Right cardiac atrium (tissue), 5 donors: ENCODE measurements at regions of chr17 and their contacts with region 1.

Region 1: DNA sequence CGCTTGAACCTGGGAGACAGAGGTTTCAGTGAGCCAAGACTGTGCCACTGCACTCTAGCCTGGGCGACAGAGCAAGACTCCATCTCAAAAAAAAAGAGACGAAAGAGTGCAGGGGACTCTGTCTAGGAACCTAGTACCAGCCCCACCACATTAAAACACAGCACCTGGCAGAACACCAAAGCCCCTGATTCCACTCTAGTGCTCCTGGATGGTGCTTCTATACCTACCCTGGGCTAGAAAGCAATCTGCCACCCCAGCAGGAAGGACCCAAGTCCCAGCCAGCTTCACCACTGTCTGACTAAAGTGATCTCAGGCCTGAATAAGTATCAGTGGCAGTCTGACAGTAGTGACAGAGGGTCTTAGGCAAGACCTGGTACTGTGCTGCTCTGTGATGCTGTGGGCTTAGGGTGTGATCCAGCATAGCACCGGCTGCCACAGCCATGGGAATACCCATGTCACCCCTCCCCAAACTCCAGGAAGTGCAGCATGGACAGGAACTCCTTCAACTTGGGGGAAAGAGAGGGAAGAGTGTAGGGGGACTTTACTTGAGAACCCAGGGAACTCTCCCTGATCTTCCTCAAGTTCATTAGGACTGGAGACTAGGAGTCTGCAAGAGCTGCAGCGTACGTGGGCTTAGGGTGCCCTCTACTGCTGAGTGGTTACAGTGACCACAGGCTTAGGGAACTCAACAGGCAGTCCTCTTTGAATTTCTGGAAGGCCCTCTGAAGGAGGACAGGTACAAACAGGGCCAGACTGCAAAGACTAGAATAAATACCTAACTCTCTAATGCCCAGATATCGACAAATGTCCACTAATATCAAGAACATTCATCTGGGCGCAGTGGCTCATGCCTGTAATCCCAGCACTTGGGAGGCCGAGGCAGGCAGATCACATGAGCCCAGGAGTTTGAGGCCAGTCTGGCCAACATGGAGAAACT is 30.0 kb upstream of the RNF43 start:
- DNase-seq: peak; percentile 44 to 74 (median 69)
- ATAC-seq: peak; percentile 71 to 74
- H3K4me3 ChIP-seq: no peak overlapping the region
- H3K27ac ChIP-seq: no peak overlapping the region
- H3K4me1 ChIP-seq: no peaks in the 10 kb centered on the region
- H3K27me3 ChIP-seq: no peaks in the 10 kb centered on the region

Region 2: DNA sequence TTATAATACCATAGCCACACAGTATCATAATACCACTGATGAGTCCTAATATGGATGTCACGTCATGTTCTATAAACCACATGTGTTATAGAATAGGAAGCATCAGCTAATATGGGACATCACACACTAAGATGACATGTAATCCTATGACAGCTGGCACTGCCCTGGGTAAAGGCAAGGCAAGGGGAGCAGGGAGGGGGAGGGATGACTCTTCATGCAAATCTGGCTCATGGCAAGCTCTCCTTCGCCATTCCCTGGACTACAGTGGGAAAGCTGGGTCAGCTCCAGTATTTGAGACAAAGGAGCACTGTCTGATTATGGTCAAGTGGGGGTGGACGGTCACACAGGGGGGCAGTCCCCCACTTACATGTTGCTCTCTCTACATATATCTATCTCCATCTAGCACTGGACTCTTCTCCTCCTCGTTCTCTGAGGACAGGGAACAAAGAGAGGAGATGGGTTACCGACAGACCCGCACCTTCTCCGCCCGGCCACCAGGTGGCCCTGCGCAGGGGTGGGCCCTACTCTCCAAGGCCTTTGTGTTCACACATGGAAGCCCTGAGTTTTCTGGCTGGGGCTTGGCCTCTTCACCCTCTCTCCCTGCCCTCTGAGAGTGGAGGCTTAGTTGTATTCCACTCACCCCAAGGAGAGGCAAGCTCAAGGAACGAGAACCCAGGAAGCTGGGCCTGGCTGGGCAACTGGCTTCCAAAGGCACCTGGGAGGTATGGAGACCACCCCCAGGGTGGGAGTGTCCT is 143.2 kb before region 1 on chr17:
- intact Hi-C with region 1: loop called in 1 of 4 experiments (anchors 10 kb)
- DNase-seq: no peak
- ATAC-seq: peak; percentile 37 to 63
- H3K4me3 ChIP-seq: no peak overlapping the region
- H3K27ac ChIP-seq: no peak overlapping the region
- H3K4me1 ChIP-seq: no peaks in the 10 kb centered on the region
- H3K27me3 ChIP-seq: no peaks in the 10 kb centered on the region

Region 3: DNA sequence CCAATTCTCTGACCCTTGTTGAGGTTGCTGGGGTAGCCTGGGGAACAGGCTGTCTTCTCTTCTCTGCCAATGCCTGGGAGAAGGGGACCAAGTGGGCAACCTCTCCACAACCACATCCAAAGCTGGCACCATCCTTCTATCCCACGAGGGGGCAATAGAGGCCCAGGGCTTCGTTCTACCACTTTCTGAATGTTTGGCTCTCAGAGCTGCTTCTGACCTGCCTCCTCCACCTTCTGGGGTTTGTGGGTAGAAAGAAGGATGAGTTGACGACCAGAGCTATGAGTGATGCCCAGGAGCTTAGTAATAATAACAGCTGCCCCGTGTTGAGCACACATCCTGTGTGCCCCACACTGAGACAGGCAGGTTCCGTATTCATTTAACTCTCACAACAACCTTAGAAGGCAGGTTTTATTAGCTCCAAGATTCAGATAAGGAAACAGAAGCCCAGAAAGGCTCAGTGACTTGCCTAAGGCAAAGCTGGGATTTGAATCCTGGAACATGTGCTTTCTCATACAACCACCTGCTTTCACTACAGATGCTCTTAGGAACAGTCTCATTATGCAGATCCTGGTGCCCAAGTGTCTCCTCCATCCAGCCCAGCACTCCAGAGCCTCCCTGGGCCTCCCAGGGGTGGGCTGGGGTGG is 129.8 kb before region 1 on chr17:
- intact Hi-C with region 1: loop called in 2 of 4 experiments (anchors 10 kb)
- DNase-seq: no peak
- ATAC-seq: peak in 1 of 2 donors; percentile 37
- H3K4me3 ChIP-seq: no peak overlapping the region
- H3K27ac ChIP-seq: no peak overlapping the region
- H3K4me1 ChIP-seq: no peaks in the 10 kb centered on the region
- H3K27me3 ChIP-seq: no peaks in the 10 kb centered on the region

Region 4: GRCh38 chr17:58786613-58787295 is 339.4 kb after region 1 on chr17:
- intact Hi-C with region 1: no loop called
- DNase-seq: no peak
- ATAC-seq: no peak
- H3K4me3 ChIP-seq: no peak overlapping the region
- H3K27ac ChIP-seq: no peak overlapping the region
- H3K4me1 ChIP-seq: peaks cover 2% of the 10 kb centered on the region
- H3K27me3 ChIP-seq: no peaks in the 10 kb centered on the region